Aorta (tissue), 5 donors: ENCODE measurements at regions of chr1 and their contacts with region 1.

Region 1: GRCh38 chr1:36134505-36135329 is 9.7 kb upstream of the COL8A2 start:
- DNase-seq: peak; percentile 72 to 85
- ATAC-seq: peak; percentile 84
- H3K4me3 ChIP-seq: no peak overlapping the region
- H3K27ac ChIP-seq: peak overlapping the region; percentile 84 to 99
- H3K4me1 ChIP-seq: peaks cover 0 to 1% of the 10 kb centered on the region in 2 donors
- H3K27me3 ChIP-seq: no peaks in the 10 kb centered on the region

Region 2: DNA sequence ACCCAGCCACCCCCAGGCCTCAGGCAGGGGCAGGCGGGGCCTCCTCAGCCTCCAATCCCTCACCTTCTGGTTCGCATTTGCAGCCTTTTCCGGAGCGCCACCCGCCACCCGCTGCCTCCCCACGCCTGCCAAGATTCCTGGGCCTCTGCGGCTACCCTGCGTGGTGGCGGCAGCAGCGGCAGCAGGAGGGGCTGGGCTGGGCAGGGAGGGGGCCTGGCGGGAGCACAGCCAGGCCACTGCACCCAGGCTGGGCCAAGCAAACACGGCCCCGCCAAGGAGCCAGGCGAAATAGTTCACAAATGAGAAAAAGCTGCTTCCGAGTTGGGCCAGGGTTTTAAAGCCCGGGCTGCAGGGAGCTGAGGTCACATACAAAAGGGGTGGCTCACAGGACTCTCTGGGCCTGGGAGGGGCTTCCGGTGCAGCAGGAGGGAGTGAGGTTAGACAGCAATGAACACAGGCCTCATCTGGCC is 19.5 kb before region 1 on chr1:
- intact Hi-C with region 1: loop called in 1 of 2 experiments (anchors 1 kb)
- DNase-seq: peak; percentile 92 to 93
- ATAC-seq: peak; percentile 92
- H3K4me3 ChIP-seq: no peak overlapping the region
- H3K27ac ChIP-seq: peak overlapping the region; percentile 20 to 89
- H3K4me1 ChIP-seq: peaks cover 0 to 4% of the 10 kb centered on the region in 2 donors
- H3K27me3 ChIP-seq: no peaks in the 10 kb centered on the region